HCT116 (cell line): ENCODE measurements at regions of chr10 and their contacts with region 1.

Region 1: GRCh38 chr10:89426230-89426868 is 12.0 kb downstream of the IFIT5 start:
- DNase-seq: no peak
- ATAC-seq: peak; percentile 87
- H3K4me3 ChIP-seq: no peak overlapping the region
- H3K27ac ChIP-seq: no peak overlapping the region
- H3K4me1 ChIP-seq: peaks cover 0 to 14% of the 10 kb centered on the region in 2 experiments; a peak in 2 of 4 replicates
- H3K27me3 ChIP-seq: no peaks in the 10 kb centered on the region
- CTCF ChIP-seq: peak; percentile 69 to 83 (median 80)
- POLR2A ChIP-seq: no peak
- RAD21 ChIP-seq: peak; percentile 91

Region 2: GRCh38 chr10:89369156-89370105 is 56.9 kb before region 1 on chr10:
- CTCF ChIA-PET with region 1: no interaction called
- POLR2A ChIA-PET with region 1: no interaction called
- RAD21 ChIA-PET with region 1: no interaction called
- intact Hi-C with region 1: no loop called
- DNase-seq: no peak
- ATAC-seq: peak; percentile 59
- H3K4me3 ChIP-seq: no peak overlapping the region
- H3K27ac ChIP-seq: no peak overlapping the region
- H3K4me1 ChIP-seq: no peaks in the 10 kb centered on the region
- H3K27me3 ChIP-seq: no peaks in the 10 kb centered on the region
- CTCF ChIP-seq: peak; percentile 51 to 82 (median 69); a peak in 5 of 6 replicates
- POLR2A ChIP-seq: no peak
- RAD21 ChIP-seq: peak; percentile 85

Region 3: GRCh38 chr10:89442289-89442688 is 15.9 kb after region 1 on chr10:
- CTCF ChIA-PET with region 1: no interaction called
- POLR2A ChIA-PET with region 1: no interaction called
- RAD21 ChIA-PET with region 1: no interaction called
- intact Hi-C with region 1: loop called (anchors 1 kb)
- DNase-seq: no peak
- ATAC-seq: no peak
- H3K4me3 ChIP-seq: no peak overlapping the region
- H3K27ac ChIP-seq: no peak overlapping the region
- H3K4me1 ChIP-seq: no peaks in the 10 kb centered on the region
- H3K27me3 ChIP-seq: no peaks in the 10 kb centered on the region
- CTCF ChIP-seq: no peak
- POLR2A ChIP-seq: no peak
- RAD21 ChIP-seq: no peak

Region 4: DNA sequence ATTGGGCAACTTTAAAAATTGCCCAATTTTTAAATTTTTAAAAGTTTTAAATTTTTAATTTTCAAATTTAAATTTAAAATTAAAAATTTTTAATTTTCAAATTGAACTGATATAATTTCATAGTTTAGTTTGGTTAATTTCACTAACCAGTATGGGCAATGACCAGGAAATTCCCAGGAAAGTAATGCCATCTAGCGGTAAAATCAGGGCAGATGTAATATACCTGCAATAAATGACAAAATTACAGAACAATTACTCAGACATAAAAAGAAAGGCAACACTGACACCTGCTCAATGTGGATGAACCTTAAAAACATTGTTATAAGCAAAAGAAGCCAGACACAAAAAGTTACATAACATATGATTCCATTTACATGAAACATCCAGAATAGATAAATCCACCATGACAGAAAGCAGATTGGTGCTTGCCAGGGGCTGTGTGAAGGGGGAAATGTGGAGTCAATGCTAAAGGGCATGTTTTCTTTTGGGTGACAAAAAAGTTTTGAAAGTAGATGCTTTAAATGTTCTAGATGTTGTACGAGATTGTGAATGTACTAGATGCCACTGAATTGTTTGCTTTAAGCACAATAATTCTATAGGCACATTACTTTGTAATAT is 137.6 kb after region 1 on chr10:
- CTCF ChIA-PET with region 1: no interaction called
- POLR2A ChIA-PET with region 1: no interaction called
- RAD21 ChIA-PET with region 1: no interaction called
- intact Hi-C with region 1: loop called (anchors 1 kb)
- DNase-seq: peak; percentile 47
- ATAC-seq: peak; percentile 80
- H3K4me3 ChIP-seq: no peak overlapping the region
- H3K27ac ChIP-seq: no peak overlapping the region
- H3K4me1 ChIP-seq: no peaks in the 10 kb centered on the region
- H3K27me3 ChIP-seq: no peaks in the 10 kb centered on the region
- CTCF ChIP-seq: peak; percentile 68 to 92 (median 70)
- POLR2A ChIP-seq: no peak
- RAD21 ChIP-seq: peak; percentile 91

Region 5: GRCh38 chr10:90138844-90139243 is 712.5 kb after region 1 on chr10:
- CTCF ChIA-PET with region 1: no interaction called
- POLR2A ChIA-PET with region 1: no interaction called
- RAD21 ChIA-PET with region 1: no interaction called
- intact Hi-C with region 1: loop called (anchors 2 kb)
- DNase-seq: no peak
- ATAC-seq: no peak
- H3K4me3 ChIP-seq: no peak overlapping the region
- H3K27ac ChIP-seq: no peak overlapping the region
- H3K4me1 ChIP-seq: no peaks in the 10 kb centered on the region
- H3K27me3 ChIP-seq: no peaks in the 10 kb centered on the region
- CTCF ChIP-seq: peak; percentile 43 to 76 (median 63); a peak in 5 of 6 replicates
- POLR2A ChIP-seq: no peak
- RAD21 ChIP-seq: peak; percentile 72

Region 6: GRCh38 chr10:90579602-90580242 is 1153.4 kb after region 1 on chr10:
- CTCF ChIA-PET with region 1: no interaction called
- POLR2A ChIA-PET with region 1: no interaction called
- RAD21 ChIA-PET with region 1: no interaction called
- intact Hi-C with region 1: loop called (anchors 5 kb)
- DNase-seq: peak; percentile 61
- ATAC-seq: peak; percentile 98
- H3K4me3 ChIP-seq: no peak overlapping the region
- H3K27ac ChIP-seq: peak overlapping the region; percentile 38
- H3K4me1 ChIP-seq: peaks cover 12 to 34% of the 10 kb centered on the region in 2 experiments
- H3K27me3 ChIP-seq: no peaks in the 10 kb centered on the region
- CTCF ChIP-seq: peak; percentile 45 to 60 (median 55); a peak in 5 of 6 replicates
- POLR2A ChIP-seq: no peak
- RAD21 ChIP-seq: peak; percentile 49

Region 7: DNA sequence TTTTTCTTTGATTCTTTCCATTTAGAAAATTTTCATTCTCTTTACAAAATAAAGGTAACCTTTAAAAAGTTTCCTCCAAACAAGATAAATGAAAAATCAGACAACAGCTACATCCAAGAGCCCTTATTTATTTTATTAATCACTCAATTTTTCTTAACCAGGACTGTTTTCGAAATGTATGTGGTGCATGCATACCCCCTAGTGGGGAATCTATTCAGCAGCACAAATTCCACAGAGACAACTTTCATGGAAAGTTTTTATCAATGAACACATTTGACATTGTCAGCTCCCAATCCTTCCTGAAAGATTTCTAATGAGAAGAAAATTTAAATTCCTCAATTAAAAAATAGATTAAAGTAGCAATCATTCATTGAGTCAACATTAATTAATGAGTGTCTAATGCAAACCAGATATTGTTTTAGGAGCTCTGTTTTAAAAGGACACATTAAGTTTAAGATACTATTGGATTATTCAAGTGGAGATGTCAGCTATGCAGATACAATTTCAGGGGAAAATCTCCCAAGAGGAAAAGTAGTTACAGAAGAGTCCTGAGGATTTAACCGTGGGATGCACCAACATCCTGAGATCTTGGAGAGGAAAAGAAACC is 1436.7 kb after region 1 on chr10:
- CTCF ChIA-PET with region 1: no interaction called
- POLR2A ChIA-PET with region 1: no interaction called
- RAD21 ChIA-PET with region 1: no interaction called
- intact Hi-C with region 1: loop called (anchors 5 kb)
- DNase-seq: no peak
- ATAC-seq: no peak
- H3K4me3 ChIP-seq: no peak overlapping the region
- H3K27ac ChIP-seq: no peak overlapping the region
- H3K4me1 ChIP-seq: peaks cover 18 to 31% of the 10 kb centered on the region in 2 experiments
- H3K27me3 ChIP-seq: no peaks in the 10 kb centered on the region
- CTCF ChIP-seq: peak; percentile 76 to 90 (median 90)
- POLR2A ChIP-seq: no peak
- RAD21 ChIP-seq: peak; percentile 91